Endothelial cell of umbilical vein (primary cell): ENCODE measurements at regions of chr17 and their contacts with region 1.

Region 1: GRCh38 chr17:76557368-76558197 is 17.7 kb downstream of the PRCD start:
- DNase-seq: peak; percentile 98
- H3K4me3 ChIP-seq: peak overlapping the region; percentile 66 to 94 (median 78)
- H3K27ac ChIP-seq: peak overlapping the region; percentile 68
- H3K4me1 ChIP-seq: peaks cover 40% of the 10 kb centered on the region
- H3K27me3 ChIP-seq: no peaks in the 10 kb centered on the region
- CTCF ChIP-seq: peak; percentile 80 to 88
- POLR2A ChIP-seq: peak; percentile 97

Region 2: DNA sequence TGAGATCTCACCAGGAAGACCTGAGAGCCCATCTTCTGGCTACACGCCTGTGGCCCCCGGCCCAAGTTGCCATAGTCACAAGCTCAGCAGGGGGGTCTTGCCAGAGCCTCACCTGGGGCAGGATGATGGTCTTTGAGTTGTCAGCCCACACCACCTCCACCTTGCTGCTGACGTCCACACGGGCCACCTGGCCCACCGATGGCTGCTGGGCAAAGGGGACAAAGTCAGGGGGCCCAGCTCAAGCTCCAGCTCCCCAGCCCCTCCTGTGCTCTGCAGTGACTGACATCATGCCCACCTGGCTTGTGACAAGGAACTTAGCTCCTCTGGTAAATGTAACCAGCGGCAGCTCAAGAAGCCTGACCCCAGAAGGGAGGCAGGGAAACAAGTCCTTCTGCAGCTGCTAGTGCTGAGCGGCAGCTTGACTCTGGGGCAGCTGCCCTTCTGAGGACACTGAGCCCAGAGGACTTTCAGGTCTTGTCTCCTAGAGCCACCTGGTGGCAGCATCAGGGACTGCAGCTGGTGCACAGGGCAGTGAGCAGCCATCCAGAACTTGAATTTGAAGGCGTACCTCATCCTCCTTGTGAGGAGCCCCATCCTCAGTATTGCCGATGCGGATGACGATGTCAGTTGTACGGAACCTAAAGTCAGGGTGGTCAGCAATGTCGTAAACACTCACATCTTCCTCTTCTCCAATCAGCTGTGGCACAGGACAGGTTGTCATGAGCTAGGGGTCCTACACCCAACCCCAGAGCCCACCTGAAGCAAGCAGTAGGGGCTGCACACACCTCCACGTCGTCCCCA is 159.7 kb before region 1 on chr17:
- CTCF ChIA-PET with region 1: no interaction called
- POLR2A ChIA-PET with region 1: no interaction called
- dilution Hi-C with region 1: no loop called
- intact Hi-C with region 1: no loop called
- DNase-seq: peak; percentile 81
- H3K4me3 ChIP-seq: no peak overlapping the region
- H3K27ac ChIP-seq: no peak overlapping the region
- H3K4me1 ChIP-seq: no peaks in the 10 kb centered on the region
- H3K27me3 ChIP-seq: no peaks in the 10 kb centered on the region
- CTCF ChIP-seq: peak; percentile 92 to 93
- POLR2A ChIP-seq: no peak

Region 3: GRCh38 chr17:76547184-76547641 is 10.4 kb before region 1 on chr17:
- CTCF ChIA-PET with region 1: interaction called, 31 read pairs
- POLR2A ChIA-PET with region 1: interaction called, 3 read pairs
- dilution Hi-C with region 1: no loop called
- intact Hi-C with region 1: no loop called
- DNase-seq: peak; percentile 65
- H3K4me3 ChIP-seq: no peak overlapping the region
- H3K27ac ChIP-seq: no peak overlapping the region
- H3K4me1 ChIP-seq: peaks cover 12% of the 10 kb centered on the region
- H3K27me3 ChIP-seq: peaks cover 0 to 3% of the 10 kb centered on the region in 2 experiments
- CTCF ChIP-seq: peak; percentile 58 to 75
- POLR2A ChIP-seq: no peak

Region 4: GRCh38 chr17:76585818-76586593 is 28.4 kb after region 1 on chr17 and contains the start of gene ST6GALNAC2:
- CTCF ChIA-PET with region 1: interaction called, 24 read pairs
- POLR2A ChIA-PET with region 1: no interaction called
- dilution Hi-C with region 1: no loop called
- intact Hi-C with region 1: loop called (anchors 1 kb)
- DNase-seq: peak; percentile 50
- H3K4me3 ChIP-seq: peak within 1 kb of the TSS; percentile 17 to 37 (median 35)
- H3K27ac ChIP-seq: no peak within 1 kb of the TSS
- H3K4me1 ChIP-seq: peaks cover 5% of the 10 kb centered on the region
- H3K27me3 ChIP-seq: peaks cover 16 to 18% of the 10 kb centered on the region in 2 experiments
- CTCF ChIP-seq: peak; percentile 21 to 55
- POLR2A ChIP-seq: no peak
- total RNA-seq, gene ST6GALNAC2: 0.69 and 1.7 TPM in 2 replicates

Region 5: DNA sequence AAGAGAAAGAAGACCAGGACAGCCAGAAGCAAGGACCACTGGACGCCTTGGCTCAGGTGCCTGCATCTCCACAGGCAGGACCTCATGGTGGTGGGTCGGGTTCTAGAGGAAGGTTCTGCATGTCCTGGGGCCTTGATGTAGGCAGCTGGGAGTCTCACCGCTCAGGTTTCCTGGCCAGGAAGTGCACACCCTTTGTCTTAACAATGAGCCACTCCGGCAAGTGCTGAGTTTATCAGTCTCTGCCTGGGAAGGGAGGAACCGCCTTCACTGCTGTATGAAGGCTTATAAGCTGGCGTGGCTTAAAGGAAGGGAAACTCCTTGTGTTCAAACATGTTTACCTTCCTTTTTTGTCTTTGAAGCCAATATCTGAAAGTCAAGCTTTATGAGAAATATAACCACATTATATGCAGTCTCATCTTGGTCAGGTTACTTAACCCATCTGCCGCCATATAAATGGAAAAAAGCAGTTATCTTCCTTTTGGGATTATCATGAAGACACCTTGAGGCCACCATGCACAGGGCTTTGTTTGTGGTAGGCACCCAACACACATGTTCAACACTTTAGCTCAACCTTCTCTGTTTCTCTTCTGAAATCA is 86.1 kb after region 1 on chr17 and contains the start of gene ST6GALNAC1:
- CTCF ChIA-PET with region 1: no interaction called
- POLR2A ChIA-PET with region 1: no interaction called
- dilution Hi-C with region 1: no loop called
- intact Hi-C with region 1: no loop called
- DNase-seq: peak; percentile 26
- H3K4me3 ChIP-seq: no peak within 1 kb of the TSS
- H3K27ac ChIP-seq: no peak within 1 kb of the TSS
- H3K4me1 ChIP-seq: no peaks in the 10 kb centered on the region
- H3K27me3 ChIP-seq: peaks cover 3 to 9% of the 10 kb centered on the region in 2 experiments
- CTCF ChIP-seq: no peak
- POLR2A ChIP-seq: no peak
- total RNA-seq, gene ST6GALNAC1: 0.55 TPM in 1 of 2 replicates, not detected in the other